HEK293T (cell line): ENCODE measurements at regions of chr20 and their contacts with region 1.

Region 1: DNA sequence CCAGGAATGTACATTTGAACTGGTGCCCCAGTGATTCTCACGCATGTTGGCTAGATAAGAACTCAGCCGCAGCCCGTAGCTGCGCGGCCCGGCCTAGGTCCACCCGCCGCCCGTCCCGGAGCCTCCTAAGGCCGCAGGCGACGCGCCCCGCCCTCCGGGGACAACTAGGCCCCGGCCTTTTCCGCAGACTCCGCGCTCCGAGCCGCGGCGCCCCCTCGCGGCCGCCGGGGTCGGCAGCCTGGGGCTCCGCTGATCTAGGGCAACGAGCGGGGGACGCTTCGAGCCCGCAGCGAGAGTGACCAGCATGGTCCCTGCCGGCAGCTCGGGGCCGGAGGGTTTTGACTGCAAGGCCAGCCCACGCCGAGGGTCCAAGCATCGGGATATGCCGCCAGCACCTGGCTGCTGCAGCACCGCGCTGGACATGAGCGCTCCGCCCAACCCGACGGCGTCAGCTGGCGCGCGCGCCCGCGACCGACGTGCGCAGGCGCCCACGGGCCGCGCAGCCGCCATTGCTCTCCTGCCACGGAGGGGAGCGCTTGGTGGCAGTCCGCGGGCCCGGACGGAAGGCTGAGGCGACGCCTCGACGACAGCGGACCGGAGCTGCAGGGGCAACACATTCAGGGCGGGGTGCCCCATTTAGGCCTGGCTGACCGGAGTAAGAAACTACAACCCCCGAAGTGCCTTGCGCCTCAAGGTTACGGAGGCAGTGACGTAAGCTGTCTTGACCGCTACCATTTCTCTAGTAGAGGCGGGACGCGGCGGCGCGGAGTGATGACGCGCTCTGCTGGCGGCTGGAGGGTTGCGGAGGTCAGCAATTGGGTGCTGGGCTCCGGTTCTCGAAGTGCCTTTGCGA is at the start of gene AP5S1:
- DNase-seq: peak; percentile 91

Region 2: GRCh38 chr20:3786665-3787323 is 33.5 kb before region 1 on chr20 and contains the start of gene CENPB:
- CTCF ChIA-PET with region 1: interaction called, 13 read pairs
- POLR2A ChIA-PET with region 1: interaction called, 47 read pairs
- DNase-seq: peak; percentile 91

Region 3: DNA sequence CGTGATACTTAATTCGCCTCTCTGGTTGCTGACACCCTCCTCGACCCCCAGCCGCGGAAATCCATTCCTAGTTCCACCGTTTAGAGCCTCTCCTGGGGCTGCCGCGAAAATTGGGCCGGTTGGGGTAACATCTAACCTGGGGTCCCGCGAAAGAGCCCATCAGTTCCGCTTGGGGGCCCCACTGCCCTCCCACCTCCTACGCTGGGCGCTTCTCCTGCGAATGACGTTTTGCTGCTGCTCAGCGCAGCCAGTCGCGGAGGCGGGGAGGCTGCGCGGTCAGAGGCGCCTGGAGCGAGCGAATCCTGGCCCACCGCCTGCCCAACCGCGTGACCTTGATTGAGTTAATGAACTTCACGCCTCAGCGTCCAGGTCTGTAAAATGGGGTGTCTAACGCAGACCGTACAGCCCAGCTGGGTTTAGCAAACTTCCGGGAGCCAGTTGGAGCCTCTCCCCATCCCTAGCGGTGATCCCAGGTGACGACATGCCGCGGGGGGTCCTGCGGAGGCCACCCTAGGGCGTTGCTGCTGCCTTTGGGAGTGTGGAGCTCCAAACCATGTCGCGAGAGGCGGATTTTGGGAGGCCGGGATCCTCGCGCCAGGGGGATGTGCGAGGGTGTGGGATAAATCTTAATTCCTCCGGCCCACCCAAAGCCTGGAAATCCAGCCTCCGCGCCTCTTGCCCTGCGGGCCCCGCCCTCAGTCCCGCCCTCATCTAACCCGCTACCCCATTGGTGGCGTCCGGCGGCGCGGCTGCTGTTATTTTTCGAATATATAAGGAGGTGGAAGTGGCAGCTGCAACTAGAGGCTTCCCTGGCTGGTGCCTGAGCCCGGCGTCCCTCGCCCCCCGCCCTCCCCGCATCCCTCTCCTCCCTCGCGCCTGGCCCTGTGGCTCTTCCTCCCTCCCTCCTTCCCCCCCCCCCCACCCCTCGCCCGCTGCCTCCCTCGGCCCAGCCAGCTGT is 24.5 kb before region 1 on chr20 and contains the start of gene CDC25B:
- CTCF ChIA-PET with region 1: interaction called, 6 read pairs
- POLR2A ChIA-PET with region 1: interaction called, 10 read pairs
- DNase-seq: peak; percentile 89

Region 4: DNA sequence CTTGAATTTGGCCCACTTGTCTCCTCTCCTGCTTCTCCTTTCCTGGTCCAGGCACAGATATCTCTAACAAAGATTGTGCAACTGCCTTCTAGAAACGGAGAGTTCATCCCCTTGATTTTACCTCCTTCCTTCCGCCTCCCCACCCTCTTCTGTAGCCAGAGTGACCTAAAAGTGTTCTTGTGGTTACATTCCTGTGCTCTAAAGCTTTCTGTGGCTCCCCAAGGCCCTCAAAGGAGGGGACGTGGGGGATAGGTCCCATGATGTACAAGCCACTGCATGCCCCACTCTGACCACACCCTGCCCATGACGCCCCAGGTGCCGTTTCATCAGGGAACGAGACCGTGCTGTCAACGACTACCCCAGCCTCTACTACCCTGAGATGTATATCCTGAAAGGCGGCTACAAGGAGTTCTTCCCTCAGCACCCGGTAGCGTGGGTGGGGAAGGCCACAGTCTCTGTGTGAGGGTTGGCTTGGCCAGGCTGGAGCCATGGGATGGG is 16.0 kb before region 1 on chr20:
- CTCF ChIA-PET with region 1: interaction called, 4 read pairs
- POLR2A ChIA-PET with region 1: interaction called, 10 read pairs
- DNase-seq: no peak

Region 5: GRCh38 chr20:3843490-3843889 is 23.2 kb after region 1 on chr20:
- CTCF ChIA-PET with region 1: interaction called, 4 read pairs
- POLR2A ChIA-PET with region 1: interaction called, 20 read pairs
- DNase-seq: no peak

Region 6: DNA sequence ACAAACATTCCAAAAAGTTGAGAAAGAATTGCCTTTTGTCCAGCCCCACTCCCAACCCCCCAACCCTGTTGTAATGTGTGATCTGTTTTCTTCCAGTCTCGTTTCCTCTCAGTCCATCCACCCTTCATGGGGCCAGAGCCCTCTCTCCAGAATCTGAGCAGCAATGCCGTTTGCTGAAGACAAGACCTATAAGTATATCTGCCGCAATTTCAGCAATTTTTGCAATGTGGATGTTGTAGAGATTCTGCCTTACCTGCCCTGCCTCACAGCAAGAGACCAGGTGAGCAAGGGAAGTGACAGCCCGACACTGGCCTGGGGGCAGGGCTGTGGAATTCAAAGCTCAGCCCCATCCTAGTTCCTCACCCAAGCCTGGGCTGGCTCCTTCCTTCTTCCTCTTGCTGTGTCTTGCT is 34.2 kb after region 1 on chr20:
- CTCF ChIA-PET with region 1: interaction called, 4 read pairs
- POLR2A ChIA-PET with region 1: interaction called, 10 read pairs
- DNase-seq: no peak